Left cardiac atrium (tissue), 4 donors: ENCODE measurements at regions of chr7 and their contacts with region 1.

Region 1: DNA sequence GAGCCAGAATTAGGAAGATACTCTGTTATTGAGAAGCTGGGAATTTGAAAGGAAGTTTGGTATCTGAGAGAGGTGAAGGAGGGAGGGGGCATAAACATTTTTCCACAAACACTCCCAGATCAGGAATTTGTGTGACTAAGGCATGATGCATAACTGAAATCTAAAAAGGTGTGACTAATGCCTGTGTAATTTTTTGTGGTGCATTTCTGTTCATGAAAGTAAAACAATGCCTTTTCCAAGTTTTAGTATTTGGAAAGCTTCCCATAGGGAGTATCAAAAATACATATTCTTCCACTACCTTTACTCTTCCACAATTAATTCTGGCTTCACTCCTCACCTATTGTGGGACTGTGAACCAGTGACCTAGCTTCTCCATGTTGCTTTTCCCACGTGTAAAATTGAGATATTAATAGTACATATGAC is 56.4 kb upstream of the CAV2 start:
- DNase-seq: no peak
- ATAC-seq: peak in 1 of 2 donors; percentile 80

Region 2: GRCh38 chr7:115869225-115869624 is 573.9 kb before region 1 on chr7:
- intact Hi-C with region 1: no loop called
- DNase-seq: no peak
- ATAC-seq: no peak

Region 3: DNA sequence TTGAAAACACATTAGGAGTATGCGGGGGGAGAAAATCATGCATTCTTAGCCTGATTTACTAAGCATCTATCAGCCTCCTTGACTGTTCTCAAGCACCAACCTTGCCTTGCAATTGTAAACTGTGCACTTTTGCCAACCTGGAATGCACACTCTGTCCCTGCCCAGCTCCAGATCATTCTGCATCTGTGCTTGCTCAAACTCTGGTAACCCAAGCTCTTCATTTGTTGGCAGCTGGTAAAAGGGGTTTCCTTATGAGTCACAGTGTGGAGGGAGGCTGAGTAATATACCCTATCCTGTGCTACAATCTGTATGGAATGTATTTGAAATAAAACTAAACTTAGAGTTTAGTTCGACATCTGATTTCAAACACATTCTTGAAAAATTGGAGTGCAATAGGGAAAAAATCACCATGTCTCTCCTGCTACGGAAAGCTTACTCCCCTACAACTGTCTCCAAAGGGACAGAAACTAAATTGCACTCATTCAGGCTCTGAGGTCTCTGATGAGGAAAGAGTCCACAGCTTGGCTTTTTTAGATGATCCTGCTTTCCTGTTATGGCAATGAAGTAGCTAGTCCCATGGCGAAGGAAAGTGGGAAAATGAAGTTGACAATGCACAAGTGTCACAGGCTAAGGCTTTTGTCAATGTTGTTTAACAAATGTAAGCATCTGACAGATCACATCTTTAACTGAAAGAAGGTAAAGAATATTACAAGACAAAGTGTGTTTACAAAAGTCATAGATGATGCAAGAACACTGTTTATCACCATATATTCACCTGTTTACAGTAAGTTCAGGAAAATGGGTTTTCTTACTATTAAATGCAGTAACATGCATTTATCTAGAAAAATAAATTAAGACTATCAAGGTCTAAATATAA is 170.9 kb before region 1 on chr7:
- intact Hi-C with region 1: loop called in 1 of 2 experiments (anchors 10 kb)
- DNase-seq: peak; percentile 33
- ATAC-seq: peak; percentile 89 to 99

Region 4: DNA sequence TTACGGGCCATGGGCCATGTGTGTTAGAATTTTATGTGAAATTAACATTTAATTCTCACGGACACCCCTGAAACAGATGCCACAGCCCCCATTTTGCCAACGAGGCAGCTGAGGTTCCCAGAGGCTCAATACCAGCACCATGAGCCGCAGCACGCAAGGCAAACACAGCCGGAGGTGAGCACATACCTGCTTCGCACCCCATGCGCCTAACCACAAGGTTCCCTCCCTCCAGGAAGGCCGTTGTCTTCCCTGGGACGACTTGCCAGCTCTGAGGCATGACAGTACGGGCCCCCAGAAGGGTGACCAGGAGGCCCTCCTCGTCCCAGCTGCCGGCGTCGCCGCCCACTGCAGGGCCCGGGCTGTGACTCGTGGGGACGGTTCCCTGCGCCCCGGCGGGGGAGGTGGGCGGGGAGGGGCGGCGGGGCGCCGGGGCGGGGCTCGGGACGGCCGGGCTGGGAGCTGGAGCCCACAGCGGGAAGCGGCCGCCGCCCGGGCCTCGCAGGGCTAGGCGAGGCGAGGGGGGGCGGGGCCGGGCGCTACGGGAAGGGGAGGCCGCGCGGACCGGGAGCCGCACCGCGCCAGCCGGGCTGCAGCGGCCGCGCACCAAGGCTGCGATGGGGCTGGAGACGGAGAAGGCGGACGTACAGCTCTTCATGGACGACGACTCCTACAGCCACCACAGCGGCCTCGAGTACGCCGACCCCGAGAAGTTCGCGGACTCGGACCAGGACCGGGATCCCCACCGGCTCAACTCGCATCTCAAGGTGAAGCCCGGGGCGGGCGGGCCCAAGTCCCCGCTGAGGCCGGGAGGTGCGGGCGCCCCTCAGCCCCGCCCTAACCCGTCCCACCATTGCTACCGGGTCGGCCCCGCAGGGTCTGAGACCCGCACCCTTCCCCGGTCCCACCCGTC is 56.3 kb after region 1 on chr7 and contains the start of gene CAV2:
- intact Hi-C with region 1: loop called in 1 of 2 experiments (anchors 10 kb)
- DNase-seq: peak; percentile 84
- ATAC-seq: peak; percentile 92
- total RNA-seq, gene CAV2: 167 to 244 TPM